ENCODE measurements at regions of chr10 and their contacts with region 1.

Region 1: GRCh38 chr10:80389809-80390208 is 18.5 kb upstream of the PRXL2A start:
- DNase-seq: no peak
- ATAC-seq: no peak
- H3K4me3 ChIP-seq: no peak overlapping the region
- H3K27ac ChIP-seq: peak overlapping the region in 1 of 12 donors; percentile 65
- H3K4me1 ChIP-seq: peaks cover 0 to 40% (median 3%) of the 10 kb centered on the region in 12 donors
- H3K27me3 ChIP-seq: no peaks in the 10 kb centered on the region
- CTCF ChIP-seq: no peak
- POLR2A ChIP-seq: no peak

Region 2: GRCh38 chr10:80260295-80261243 is 129.2 kb before region 1 on chr10:
- intact Hi-C with region 1: no loop called
- DNase-seq: no peak
- ATAC-seq: peak in 3 of 4 donors; percentile 30 to 49 (median 42)
- H3K4me3 ChIP-seq: no peak overlapping the region
- H3K27ac ChIP-seq: no peak overlapping the region
- H3K4me1 ChIP-seq: peaks cover 0 to under 1% (median 0%) of the 10 kb centered on the region in 12 donors
- H3K27me3 ChIP-seq: peaks cover 0 to 7% (median 0%) of the 10 kb centered on the region in 9 donors
- CTCF ChIP-seq: peak; percentile 66 to 88 (median 80)
- POLR2A ChIP-seq: no peak

Region 3: GRCh38 chr10:80498833-80499741 is 109.3 kb after region 1 on chr10:
- intact Hi-C with region 1: loop called in 3 of 10 experiments (anchors 5 to 10 kb)
- DNase-seq: peak; percentile 81 to 97 (median 94)
- ATAC-seq: peak; percentile 82 to 95 (median 89)
- H3K4me3 ChIP-seq: peak overlapping the region in 1 of 12 donors; percentile 18
- H3K27ac ChIP-seq: peak overlapping the region; percentile 69 to 95 (median 80)
- H3K4me1 ChIP-seq: peaks cover 54 to 99% (median 86%) of the 10 kb centered on the region in 12 donors
- H3K27me3 ChIP-seq: no peaks in the 10 kb centered on the region
- CTCF ChIP-seq: no peak
- POLR2A ChIP-seq: peak in 1 of 2 donors; percentile 9

Region 4: GRCh38 chr10:80509403-80510161 is 119.8 kb after region 1 on chr10:
- intact Hi-C with region 1: loop called in 5 of 10 experiments (anchors 5 to 10 kb)
- DNase-seq: peak in 4 of 5 donors; percentile 55 to 75 (median 72)
- ATAC-seq: peak; percentile 49 to 86 (median 72)
- H3K4me3 ChIP-seq: no peak overlapping the region
- H3K27ac ChIP-seq: peak overlapping the region; percentile 46 to 95 (median 80)
- H3K4me1 ChIP-seq: peaks cover 9 to 71% (median 60%) of the 10 kb centered on the region in 12 donors
- H3K27me3 ChIP-seq: no peaks in the 10 kb centered on the region
- CTCF ChIP-seq: no peak
- POLR2A ChIP-seq: no peak

Region 5: GRCh38 chr10:80599424-80599847 is 209.6 kb after region 1 on chr10:
- intact Hi-C with region 1: loop called in 1 of 10 experiments (anchors 5 kb)
- DNase-seq: peak; percentile 25 to 76 (median 40)
- ATAC-seq: peak in 3 of 4 donors; percentile 68 to 89 (median 88)
- H3K4me3 ChIP-seq: no peak overlapping the region
- H3K27ac ChIP-seq: no peak overlapping the region
- H3K4me1 ChIP-seq: peaks cover 0 to 16% (median 0%) of the 10 kb centered on the region in 12 donors
- H3K27me3 ChIP-seq: no peaks in the 10 kb centered on the region
- CTCF ChIP-seq: peak; percentile 45 to 77 (median 60)
- POLR2A ChIP-seq: no peak